Mammary epithelial cell (primary cell): ENCODE measurements at regions of chr18 and their contacts with region 1.

Region 1: GRCh38 chr18:22933206-22933957 is at the start of gene RBBP8:
- DNase-seq: peak; percentile 79
- H3K4me3 ChIP-seq: peak within 1 kb of the TSS; percentile 49 to 77 (median 66)
- H3K27ac ChIP-seq: peak within 1 kb of the TSS; percentile 95
- H3K4me1 ChIP-seq: peaks cover 36% of the 10 kb centered on the region
- H3K27me3 ChIP-seq: no peaks in the 10 kb centered on the region
- CTCF ChIP-seq: no peak
- total RNA-seq, gene RBBP8: 165 to 692 TPM

Region 2: GRCh38 chr18:22831441-22831904 is 101.9 kb before region 1 on chr18:
- CTCF ChIA-PET with region 1: no interaction called
- dilution Hi-C with region 1: loop called (anchors 10 kb)
- in situ Hi-C with region 1: loop called in 1 of 2 experiments (anchors 25 kb)
- intact Hi-C with region 1: loop called (anchors 5 kb)
- DNase-seq: peak; percentile 87
- H3K4me3 ChIP-seq: no peak overlapping the region
- H3K27ac ChIP-seq: peak overlapping the region; percentile 68
- H3K4me1 ChIP-seq: peaks cover 38% of the 10 kb centered on the region
- H3K27me3 ChIP-seq: no peaks in the 10 kb centered on the region
- CTCF ChIP-seq: no peak

Region 3: DNA sequence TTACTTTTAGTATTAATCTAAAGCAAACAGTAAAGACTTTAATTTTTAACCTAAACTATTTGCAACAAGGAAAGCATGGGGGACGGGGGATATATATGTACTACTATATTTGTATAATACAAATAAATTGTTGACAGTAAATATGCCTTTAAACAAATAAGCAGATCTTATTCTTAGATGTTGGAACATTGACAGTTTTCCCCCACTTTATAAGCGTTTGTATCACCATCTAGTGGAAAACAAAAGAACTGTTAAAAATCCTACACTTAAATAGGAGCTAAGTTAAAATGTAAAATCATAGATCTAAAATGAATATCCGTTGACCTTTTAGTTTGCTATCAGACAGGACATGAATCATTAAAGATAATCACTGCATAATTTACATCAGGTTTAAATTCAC is 49.8 kb after region 1 on chr18:
- CTCF ChIA-PET with region 1: interaction called, 3 read pairs
- dilution Hi-C with region 1: no loop called
- in situ Hi-C with region 1: no loop called
- intact Hi-C with region 1: loop called (anchors 2 kb)
- DNase-seq: no peak
- H3K4me3 ChIP-seq: no peak overlapping the region
- H3K27ac ChIP-seq: no peak overlapping the region
- H3K4me1 ChIP-seq: peaks cover 9% of the 10 kb centered on the region
- H3K27me3 ChIP-seq: no peaks in the 10 kb centered on the region
- CTCF ChIP-seq: peak; percentile 34 to 42

Region 4: DNA sequence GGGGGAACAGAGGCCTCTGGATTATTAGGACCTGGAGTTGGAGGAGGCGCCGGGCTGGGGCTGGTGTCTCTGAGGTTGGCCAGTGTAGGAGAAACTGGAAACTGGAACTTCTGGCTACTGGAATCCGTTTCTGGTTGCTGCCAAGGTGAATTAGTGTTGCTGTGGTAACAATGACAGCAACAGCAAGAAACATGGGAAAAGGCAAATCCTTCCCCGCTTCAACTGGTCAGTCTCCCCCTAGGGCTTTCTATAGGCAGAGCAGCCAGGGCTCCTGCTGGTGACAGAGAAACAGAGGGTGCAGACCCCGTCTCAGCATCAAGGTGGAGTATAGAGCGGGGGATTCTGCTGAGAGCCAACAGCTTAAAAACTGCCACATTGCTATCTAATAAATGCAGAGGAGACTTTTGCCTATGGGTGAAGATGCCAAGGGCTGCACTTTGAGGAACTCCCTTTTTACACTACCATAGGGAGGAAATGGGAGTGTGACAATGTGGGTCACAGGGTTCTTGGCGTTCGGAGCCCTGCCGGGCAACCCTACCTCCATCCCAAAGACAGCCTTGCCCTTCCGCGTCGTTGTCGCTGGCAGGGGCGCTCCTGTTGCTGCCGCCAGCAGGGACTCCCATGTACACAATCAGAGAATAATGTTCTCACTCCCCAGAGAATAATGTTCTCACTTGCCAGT is 120.5 kb after region 1 on chr18:
- CTCF ChIA-PET with region 1: no interaction called
- dilution Hi-C with region 1: no loop called
- in situ Hi-C with region 1: no loop called
- intact Hi-C with region 1: no loop called
- DNase-seq: peak; percentile 49
- H3K4me3 ChIP-seq: no peak overlapping the region
- H3K27ac ChIP-seq: no peak overlapping the region
- H3K4me1 ChIP-seq: no peaks in the 10 kb centered on the region
- H3K27me3 ChIP-seq: no peaks in the 10 kb centered on the region
- CTCF ChIP-seq: peak; percentile 29 to 32